Activated naive CD8-positive, alpha-beta T cell treated with anti-CD3 and anti-CD28 coated beads, Interleukin-2, amount 10 ng/mL, durations not matched to agents 7 days and 5 days (primary cell): ENCODE measurements at regions of chr3 and their contacts with region 1.

Region 1: GRCh38 chr3:56556908-56557830 is at the start of gene CCDC66:
- DNase-seq: peak; percentile 92
- ATAC-seq: peak; percentile 99
- H3K4me3 Mint-ChIP-seq: peak within 1 kb of the TSS; percentile 97
- H3K27ac Mint-ChIP-seq: peak within 1 kb of the TSS; percentile 99
- H3K4me1 Mint-ChIP-seq: peaks cover 9% of the 10 kb centered on the region
- H3K27me3 Mint-ChIP-seq: peaks cover 8% of the 10 kb centered on the region
- total RNA-seq, gene CCDC66: 55.3 to 58.9 TPM

Region 2: GRCh38 chr3:56536735-56537134 is 20.4 kb before region 1 on chr3:
- POLR2A ChIA-PET with region 1: no interaction called
- DNase-seq: no peak
- ATAC-seq: no peak
- H3K4me3 Mint-ChIP-seq: no peak overlapping the region
- H3K27ac Mint-ChIP-seq: no peak overlapping the region
- H3K4me1 Mint-ChIP-seq: no peaks in the 10 kb centered on the region
- H3K27me3 Mint-ChIP-seq: peaks cover 16% of the 10 kb centered on the region

Region 3: DNA sequence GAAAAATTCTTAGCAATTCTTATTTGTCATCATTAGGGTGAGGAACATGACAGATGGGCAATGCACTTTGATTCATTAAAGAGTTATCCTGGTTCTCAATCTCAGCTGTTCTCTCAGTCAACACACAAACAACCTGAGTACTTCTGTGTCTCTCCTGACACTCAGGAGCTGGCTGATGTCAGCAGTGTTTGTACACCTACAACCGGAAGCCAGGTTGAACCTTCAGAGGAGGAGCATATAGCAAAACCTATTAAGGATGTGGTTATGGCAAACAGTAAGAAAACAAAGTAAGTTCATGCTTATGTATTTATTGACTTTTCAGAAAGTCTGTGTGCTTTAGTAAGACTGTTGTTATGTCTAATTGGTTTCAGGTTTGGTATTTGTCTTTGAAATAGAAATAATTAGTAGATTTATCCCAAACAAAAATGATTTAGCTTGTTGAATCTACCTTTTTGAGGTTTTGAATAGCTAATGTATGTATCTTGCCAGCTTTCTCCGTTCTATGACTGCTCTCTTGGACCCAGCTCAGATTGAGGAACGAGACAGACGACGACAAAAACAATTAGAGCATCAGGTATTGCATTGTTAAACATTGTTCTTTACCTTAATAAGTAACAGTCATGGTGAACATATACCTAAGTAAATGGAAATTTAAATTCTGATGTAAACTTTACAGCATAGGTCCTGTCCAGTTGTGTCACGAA is 36.4 kb after region 1 on chr3:
- POLR2A ChIA-PET with region 1: interaction called, 11 read pairs
- DNase-seq: no peak
- ATAC-seq: peak; percentile 100
- H3K4me3 Mint-ChIP-seq: peak overlapping the region; percentile 48
- H3K27ac Mint-ChIP-seq: peak overlapping the region; percentile 91
- H3K4me1 Mint-ChIP-seq: peaks cover 26% of the 10 kb centered on the region
- H3K27me3 Mint-ChIP-seq: no peaks in the 10 kb centered on the region

Region 4: DNA sequence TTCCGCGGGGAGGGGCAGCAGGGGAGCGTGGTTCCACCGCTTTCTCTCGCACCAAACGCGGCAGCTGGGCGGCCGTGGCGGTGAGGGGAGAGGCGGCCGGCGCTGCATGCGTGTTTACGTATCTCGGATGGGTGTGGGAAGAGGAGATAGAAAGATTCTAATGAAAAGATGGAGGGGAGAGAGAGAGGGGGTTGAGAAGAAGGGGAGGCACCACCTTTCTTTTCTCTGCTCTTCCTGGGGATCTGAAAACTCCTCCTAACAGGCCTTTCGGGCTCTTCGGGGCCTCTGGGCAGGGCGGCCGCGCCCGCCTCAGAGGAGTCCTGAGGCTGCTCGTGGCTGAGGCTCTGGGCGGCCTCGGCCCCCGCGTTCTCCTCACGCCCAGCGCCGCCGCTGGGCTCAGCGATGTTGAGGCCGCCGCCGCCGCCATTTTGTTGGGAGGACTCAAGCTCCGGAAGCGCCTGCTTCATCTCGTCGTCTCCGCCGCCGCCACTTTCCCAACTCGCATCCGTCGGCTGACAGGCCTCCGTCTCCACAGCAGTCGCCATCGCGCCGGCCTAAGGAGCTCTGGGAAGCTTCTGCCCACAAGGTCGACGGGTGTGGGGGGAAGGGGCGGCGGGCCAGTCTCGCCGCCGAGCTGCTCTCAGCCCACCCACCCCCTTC is 125.4 kb after region 1 on chr3:
- POLR2A ChIA-PET with region 1: interaction called, 18 read pairs
- DNase-seq: peak; percentile 86
- ATAC-seq: peak; percentile 76
- H3K4me3 Mint-ChIP-seq: peak overlapping the region; percentile 98
- H3K27ac Mint-ChIP-seq: peak overlapping the region; percentile 99
- H3K4me1 Mint-ChIP-seq: peaks cover 32% of the 10 kb centered on the region
- H3K27me3 Mint-ChIP-seq: no peaks in the 10 kb centered on the region